Activated CD4-positive, alpha-beta memory T cell treated with anti-CD3 and anti-CD28 coated beads, Interleukin-2, amount 10 ng/mL, durations not matched to agents 7 days and 5 days (primary cell): ENCODE measurements at regions of chr15 and their contacts with region 1.

Region 1: GRCh38 chr15:50876989-50877360 is 31.5 kb upstream of the AP4E1 start:
- DNase-seq: peak; percentile 71
- H3K4me3 Mint-ChIP-seq: peak overlapping the region; percentile 58
- H3K27ac Mint-ChIP-seq: peak overlapping the region; percentile 52
- H3K4me1 Mint-ChIP-seq: peaks cover 50% of the 10 kb centered on the region
- H3K27me3 Mint-ChIP-seq: peaks cover 10% of the 10 kb centered on the region

Region 2: GRCh38 chr15:50675536-50676144 is 201.3 kb before region 1 on chr15:
- CTCF ChIA-PET with region 1: interaction called, 10 read pairs
- POLR2A ChIA-PET with region 1: interaction called, 5 read pairs
- DNase-seq: no peak
- H3K4me3 Mint-ChIP-seq: no peak overlapping the region
- H3K27ac Mint-ChIP-seq: no peak overlapping the region
- H3K4me1 Mint-ChIP-seq: peaks cover 12% of the 10 kb centered on the region
- H3K27me3 Mint-ChIP-seq: no peaks in the 10 kb centered on the region